ENCODE measurements at regions of chr16 and their contacts with region 1.

Region 1: DNA sequence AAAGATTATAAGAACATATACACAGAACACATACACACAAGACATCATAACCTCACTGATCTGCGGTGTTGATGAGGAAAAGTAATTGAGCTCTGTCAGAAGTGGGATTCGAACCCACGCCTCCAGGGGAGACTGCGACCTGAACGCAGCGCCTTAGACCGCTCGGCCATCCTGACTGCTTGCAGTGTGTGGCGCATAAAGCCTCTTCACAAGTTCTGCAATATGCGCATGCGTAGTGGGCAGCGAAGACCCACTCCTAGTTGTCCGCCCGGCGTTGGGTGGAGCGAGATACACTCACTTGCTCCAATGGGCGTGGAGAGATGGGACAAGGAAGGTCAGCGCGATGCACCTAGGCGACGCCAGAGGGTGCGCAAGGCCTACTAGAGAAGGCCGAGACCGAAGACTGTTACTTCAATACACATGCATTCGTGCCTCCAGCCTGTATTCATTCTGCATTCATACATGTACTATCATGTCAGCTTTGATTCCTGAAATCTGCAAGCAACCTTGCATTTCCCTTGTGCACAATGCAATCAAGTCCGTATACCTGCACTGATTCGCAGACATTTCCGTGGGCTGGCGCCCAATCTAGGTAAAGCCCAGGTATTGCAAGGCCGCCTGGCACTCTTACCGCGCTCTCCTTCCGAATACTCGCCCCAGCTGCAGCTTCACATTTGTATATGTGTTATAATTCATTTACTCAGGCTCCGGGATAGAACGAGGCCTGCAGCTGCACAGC is 16.1 kb upstream of the PLLP start:
- DNase-seq: peak; percentile 99 to 100 (median 99)
- H3K4me3 ChIP-seq: peak overlapping the region; percentile 60 to 67
- H3K4me3 Mint-ChIP-seq: no peak overlapping the region
- H3K27ac ChIP-seq: peak overlapping the region; percentile 53
- H3K27ac Mint-ChIP-seq: no peak overlapping the region
- H3K4me1 ChIP-seq: peaks cover 49% of the 10 kb centered on the region
- H3K4me1 Mint-ChIP-seq: peaks cover 12 to 27% (median 17%) of the 10 kb centered on the region in 4 donors
- H3K27me3 ChIP-seq: no peaks in the 10 kb centered on the region
- H3K27me3 Mint-ChIP-seq: no peaks in the 10 kb centered on the region

Region 2: GRCh38 chr16:57185944-57186871 is 114.3 kb before region 1 on chr16 and contains the starts of genes PSME3IP1 and RSPRY1:
- CTCF ChIA-PET with region 1: no interaction called
- POLR2A ChIA-PET with region 1: interaction called, 5 read pairs
- intact Hi-C with region 1: loop called (anchors 1 kb)
- DNase-seq: peak; percentile 99 to 100 (median 100)
- H3K4me3 ChIP-seq: peak within 1 kb of the TSS; percentile 88
- H3K4me3 Mint-ChIP-seq: peak within 1 kb of the TSS; percentile 97 to 99 (median 99)
- H3K27ac ChIP-seq: peak within 1 kb of the TSS; percentile 87
- H3K27ac Mint-ChIP-seq: peak within 1 kb of the TSS; percentile 95 to 99 (median 97)
- H3K4me1 ChIP-seq: peaks cover 45% of the 10 kb centered on the region
- H3K4me1 Mint-ChIP-seq: peaks cover 36 to 60% (median 48%) of the 10 kb centered on the region in 4 donors
- H3K27me3 ChIP-seq: no peaks in the 10 kb centered on the region
- H3K27me3 Mint-ChIP-seq: no peaks in the 10 kb centered on the region
- total RNA-seq, gene PSME3IP1: 147 to 157 TPM
- total RNA-seq, gene RSPRY1: 32.8 to 38.0 TPM

Region 3: DNA sequence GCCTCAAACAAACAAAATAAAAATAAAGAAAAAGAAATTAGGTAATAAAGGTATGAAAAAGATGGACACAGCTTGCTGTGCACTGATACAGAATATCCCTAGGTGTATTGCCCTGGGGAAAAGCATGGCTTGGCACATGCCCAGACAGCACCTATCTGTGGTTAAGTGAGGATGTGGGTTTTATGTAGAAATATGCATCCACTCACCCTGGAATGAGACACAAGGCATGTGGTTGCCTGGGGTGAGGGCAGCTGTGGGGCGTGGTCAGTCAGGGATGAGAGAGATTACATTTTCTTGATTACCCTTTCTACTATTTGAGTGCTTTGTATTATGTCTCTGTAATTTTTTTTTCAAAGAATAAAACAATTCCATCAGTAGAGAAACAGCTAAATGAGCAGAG is 23.0 kb before region 1 on chr16:
- CTCF ChIA-PET with region 1: interaction called, 6 read pairs
- POLR2A ChIA-PET with region 1: interaction called, 26 read pairs
- intact Hi-C with region 1: no loop called
- DNase-seq: peak; percentile 73 to 87 (median 76)
- H3K4me3 ChIP-seq: no peak overlapping the region
- H3K4me3 Mint-ChIP-seq: peak overlapping the region; percentile 71 to 87 (median 77)
- H3K27ac ChIP-seq: no peak overlapping the region
- H3K27ac Mint-ChIP-seq: peak overlapping the region; percentile 75 to 90 (median 84)
- H3K4me1 ChIP-seq: peaks cover 44% of the 10 kb centered on the region
- H3K4me1 Mint-ChIP-seq: peaks cover 29 to 44% (median 36%) of the 10 kb centered on the region in 4 donors
- H3K27me3 ChIP-seq: no peaks in the 10 kb centered on the region
- H3K27me3 Mint-ChIP-seq: no peaks in the 10 kb centered on the region

Region 4: DNA sequence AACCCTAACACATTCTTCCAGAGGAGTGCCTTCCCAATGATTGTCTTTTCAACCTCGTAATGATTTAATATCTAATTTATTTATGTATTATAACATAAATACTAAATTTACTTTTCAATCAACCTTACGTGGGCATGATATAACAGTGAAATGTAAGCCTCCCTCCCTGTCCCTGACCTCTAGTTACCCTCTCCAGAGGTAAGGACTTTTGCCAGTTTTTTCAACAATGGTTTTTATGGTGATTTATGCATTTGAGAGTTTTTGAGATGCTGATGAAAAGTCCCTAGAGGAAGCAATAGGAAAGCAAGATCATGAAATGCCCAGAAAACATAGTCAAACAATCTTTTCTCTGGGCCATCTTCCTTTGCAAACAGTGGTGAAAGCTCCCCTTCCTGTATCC is 19.1 kb after region 1 on chr16:
- CTCF ChIA-PET with region 1: no interaction called
- POLR2A ChIA-PET with region 1: no interaction called
- intact Hi-C with region 1: no loop called
- DNase-seq: no peak
- H3K4me3 ChIP-seq: no peak overlapping the region
- H3K4me3 Mint-ChIP-seq: no peak overlapping the region
- H3K27ac ChIP-seq: no peak overlapping the region
- H3K27ac Mint-ChIP-seq: no peak overlapping the region
- H3K4me1 ChIP-seq: peaks cover under 1% of the 10 kb centered on the region
- H3K4me1 Mint-ChIP-seq: peaks cover 4 to 6% (median 5%) of the 10 kb centered on the region in 4 donors
- H3K27me3 ChIP-seq: no peaks in the 10 kb centered on the region
- H3K27me3 Mint-ChIP-seq: no peaks in the 10 kb centered on the region

Region 5: GRCh38 chr16:57422026-57422944 is 121.7 kb after region 1 on chr16:
- CTCF ChIA-PET with region 1: interaction called, 174 read pairs
- POLR2A ChIA-PET with region 1: interaction called, 24 read pairs
- intact Hi-C with region 1: loop called (anchors 1 kb)
- DNase-seq: no peak
- H3K4me3 ChIP-seq: no peak overlapping the region
- H3K4me3 Mint-ChIP-seq: no peak overlapping the region
- H3K27ac ChIP-seq: no peak overlapping the region
- H3K27ac Mint-ChIP-seq: peak overlapping the region in 1 of 7 donors; percentile 53
- H3K4me1 ChIP-seq: peaks cover 5% of the 10 kb centered on the region
- H3K4me1 Mint-ChIP-seq: peaks cover 5 to 16% (median 10%) of the 10 kb centered on the region in 4 donors
- H3K27me3 ChIP-seq: no peaks in the 10 kb centered on the region
- H3K27me3 Mint-ChIP-seq: no peaks in the 10 kb centered on the region

Region 6: GRCh38 chr16:57480754-57481230 is 180.2 kb after region 1 on chr16:
- CTCF ChIA-PET with region 1: no interaction called
- POLR2A ChIA-PET with region 1: no interaction called
- intact Hi-C with region 1: no loop called
- DNase-seq: no peak
- H3K4me3 ChIP-seq: no peak overlapping the region
- H3K4me3 Mint-ChIP-seq: no peak overlapping the region
- H3K27ac ChIP-seq: no peak overlapping the region
- H3K27ac Mint-ChIP-seq: peak overlapping the region in 1 of 7 donors; percentile 21
- H3K4me1 ChIP-seq: peaks cover 24% of the 10 kb centered on the region
- H3K4me1 Mint-ChIP-seq: peaks cover 10 to 23% (median 20%) of the 10 kb centered on the region in 4 donors
- H3K27me3 ChIP-seq: no peaks in the 10 kb centered on the region
- H3K27me3 Mint-ChIP-seq: no peaks in the 10 kb centered on the region

Region 7: DNA sequence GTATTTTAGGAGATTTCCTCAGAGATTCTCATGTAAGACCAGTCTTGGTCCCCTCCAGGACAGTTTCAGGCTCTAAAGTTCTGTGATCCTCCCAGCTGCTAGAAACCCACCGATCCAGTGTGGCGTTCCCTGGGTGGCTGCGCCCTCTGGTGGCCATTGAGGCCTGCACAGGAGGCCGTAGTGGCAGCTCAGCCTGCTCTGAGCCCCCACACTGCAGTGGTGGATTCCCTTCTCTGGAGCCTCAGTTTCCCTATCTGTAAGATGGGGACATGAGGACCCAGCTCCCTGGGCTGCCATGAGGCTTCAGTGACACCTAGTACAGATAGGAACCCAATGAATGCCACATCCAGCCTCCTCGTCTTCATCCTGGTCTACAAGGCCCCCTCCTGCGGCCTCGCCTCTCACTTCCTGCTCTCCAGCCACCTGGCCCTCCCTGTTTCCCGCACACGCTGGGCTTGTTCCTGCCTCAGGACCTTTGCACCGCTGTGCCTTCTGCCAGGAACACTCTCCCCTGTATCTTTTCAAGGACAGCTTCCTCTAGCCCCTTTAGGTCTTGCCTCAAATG is 219.3 kb after region 1 on chr16:
- CTCF ChIA-PET with region 1: interaction called, 36 read pairs
- POLR2A ChIA-PET with region 1: no interaction called
- intact Hi-C with region 1: loop called (anchors 1 kb)
- DNase-seq: peak; percentile 70 to 76 (median 72)
- H3K4me3 ChIP-seq: no peak overlapping the region
- H3K4me3 Mint-ChIP-seq: no peak overlapping the region
- H3K27ac ChIP-seq: no peak overlapping the region
- H3K27ac Mint-ChIP-seq: peak overlapping the region in 1 of 7 donors; percentile 2
- H3K4me1 ChIP-seq: no peaks in the 10 kb centered on the region
- H3K4me1 Mint-ChIP-seq: peaks cover 0 to 6% (median 3%) of the 10 kb centered on the region in 4 donors
- H3K27me3 ChIP-seq: no peaks in the 10 kb centered on the region
- H3K27me3 Mint-ChIP-seq: no peaks in the 10 kb centered on the region

Region 8: DNA sequence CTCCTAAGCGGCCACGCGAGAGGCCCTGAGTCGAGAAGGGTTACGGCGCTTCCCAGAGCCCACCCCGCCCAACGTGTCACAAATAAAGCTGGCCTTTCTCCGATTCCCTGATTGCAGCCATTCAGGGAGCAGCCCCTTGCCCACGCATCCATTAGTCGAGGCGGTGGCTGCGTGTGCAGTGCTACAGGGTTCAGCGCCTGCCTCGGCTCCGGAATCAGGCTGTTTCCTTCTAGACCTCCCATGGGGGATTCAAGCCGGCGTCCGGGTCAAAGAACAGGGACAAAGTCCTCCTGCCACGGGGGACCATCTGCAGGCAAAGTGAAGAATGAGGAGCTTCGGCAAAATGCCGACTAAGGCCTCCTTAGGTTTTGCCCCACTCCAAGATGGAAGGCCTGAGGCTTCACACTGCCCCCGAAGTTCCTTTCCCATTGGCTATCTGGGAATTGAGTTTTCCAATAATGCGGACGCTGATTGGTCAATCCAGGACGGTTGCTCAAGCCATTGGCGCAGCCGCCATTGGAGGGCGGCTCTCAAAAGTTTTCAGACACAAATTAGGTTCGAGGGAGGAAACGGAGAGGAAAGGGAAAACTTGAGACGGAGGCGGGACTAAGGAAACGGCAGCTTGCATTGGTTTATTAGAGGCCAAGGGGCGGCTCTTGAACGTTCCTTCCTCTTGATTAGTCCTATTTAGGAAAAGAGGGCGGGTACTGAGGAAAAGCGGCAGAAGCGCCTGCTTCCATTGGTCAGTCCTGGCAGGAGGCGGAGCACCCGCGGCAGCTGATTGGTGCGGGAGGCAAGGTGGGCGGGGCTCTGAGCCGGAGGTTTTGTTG is 434.6 kb after region 1 on chr16:
- CTCF ChIA-PET with region 1: no interaction called
- POLR2A ChIA-PET with region 1: no interaction called
- intact Hi-C with region 1: loop called (anchors 1 kb)
- DNase-seq: peak; percentile 97 to 99 (median 99)
- H3K4me3 ChIP-seq: peak overlapping the region; percentile 91 to 95
- H3K4me3 Mint-ChIP-seq: peak overlapping the region; percentile 96 to 100 (median 98)
- H3K27ac ChIP-seq: peak overlapping the region; percentile 76
- H3K27ac Mint-ChIP-seq: peak overlapping the region; percentile 94 to 99 (median 96)
- H3K4me1 ChIP-seq: peaks cover 17% of the 10 kb centered on the region
- H3K4me1 Mint-ChIP-seq: peaks cover 14 to 37% (median 29%) of the 10 kb centered on the region in 4 donors
- H3K27me3 ChIP-seq: no peaks in the 10 kb centered on the region
- H3K27me3 Mint-ChIP-seq: no peaks in the 10 kb centered on the region

Measured in CD4-positive, alpha-beta memory T cell (primary cell).